Activated T-helper 1 cell treated with anti-CD3 and anti-CD28 coated beads, Interleukin-12 subunit alpha, Interleukin-12 subunit beta, Interleukin-2, Interleukin-4 antibody, amounts not matched to agents 30 ng/mL and 10 ng/mL and 1 ng/mL, durations not matched to agents 14 hours and 24 hours and 36 hours (primary cell): ENCODE measurements at regions of chr16 and their contacts with region 1.

Region 1: GRCh38 chr16:1351582-1352362 is at the starts of genes GNPTG and TSR3:
- DNase-seq: peak; percentile 89
- H3K4me3 Mint-ChIP-seq: peak within 1 kb of the TSS; percentile 90
- H3K27ac Mint-ChIP-seq: peak within 1 kb of the TSS; percentile 83
- H3K4me1 Mint-ChIP-seq: peaks cover 18% of the 10 kb centered on the region
- H3K27me3 Mint-ChIP-seq: peaks cover 3% of the 10 kb centered on the region
- total RNA-seq, gene GNPTG: 21.4 and 22.5 TPM in 2 replicates
- total RNA-seq, gene TSR3: 87.4 and 89.4 TPM in 2 replicates

Region 2: DNA sequence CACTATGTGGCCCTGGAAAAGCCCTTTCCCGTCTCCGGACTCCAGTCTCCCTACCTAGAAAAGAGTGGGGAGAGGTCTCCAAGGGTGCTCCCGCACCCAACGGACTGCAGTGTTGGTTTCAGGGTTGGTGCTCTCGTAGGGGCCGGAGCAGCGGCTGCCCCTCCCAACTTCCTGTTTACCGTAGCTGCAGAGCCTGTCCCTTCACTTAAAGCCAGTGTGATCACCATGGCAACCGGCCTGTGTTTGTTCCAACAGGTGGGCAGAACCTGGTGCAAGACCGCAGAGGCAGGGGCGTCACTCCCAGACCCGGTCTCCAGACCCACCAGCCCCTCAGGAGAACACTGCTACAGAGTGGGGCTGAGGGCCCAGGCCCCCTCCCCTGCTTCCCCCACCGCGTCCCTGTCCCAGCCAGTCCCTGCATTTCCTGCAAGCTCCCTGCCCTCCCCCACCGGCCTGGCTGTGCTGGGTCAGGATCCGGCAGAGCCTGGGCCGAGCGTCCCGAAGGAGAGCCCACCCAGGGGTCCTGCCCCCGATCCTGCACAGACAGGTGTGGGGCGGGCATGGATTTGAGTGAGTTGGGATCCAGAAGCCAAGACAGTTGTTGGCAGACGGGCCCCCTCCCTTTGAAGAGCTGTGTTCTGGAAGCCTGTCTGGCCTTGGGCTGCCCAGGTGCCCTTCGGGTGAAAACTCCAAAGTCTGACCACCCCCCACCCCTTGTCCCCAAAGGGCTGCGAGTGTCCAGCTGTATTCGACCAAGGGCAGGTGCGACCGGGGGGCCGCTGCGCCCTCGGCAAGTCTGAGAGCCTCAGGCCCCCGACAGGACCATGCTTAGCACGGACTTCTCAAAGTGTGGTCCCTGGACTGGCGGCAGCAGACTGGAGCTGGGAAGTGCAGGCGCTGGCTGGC is 19.8 kb before region 1 on chr16:
- intact Hi-C with region 1: loop called (anchors 1 kb)
- DNase-seq: peak; percentile 63
- H3K4me3 Mint-ChIP-seq: peak overlapping the region; percentile 54
- H3K27ac Mint-ChIP-seq: peak overlapping the region; percentile 68
- H3K4me1 Mint-ChIP-seq: peaks cover 6% of the 10 kb centered on the region
- H3K27me3 Mint-ChIP-seq: peaks cover 29% of the 10 kb centered on the region